IMR-90 (cell line): ENCODE measurements at regions of chr7 and their contacts with region 1.

Region 1: DNA sequence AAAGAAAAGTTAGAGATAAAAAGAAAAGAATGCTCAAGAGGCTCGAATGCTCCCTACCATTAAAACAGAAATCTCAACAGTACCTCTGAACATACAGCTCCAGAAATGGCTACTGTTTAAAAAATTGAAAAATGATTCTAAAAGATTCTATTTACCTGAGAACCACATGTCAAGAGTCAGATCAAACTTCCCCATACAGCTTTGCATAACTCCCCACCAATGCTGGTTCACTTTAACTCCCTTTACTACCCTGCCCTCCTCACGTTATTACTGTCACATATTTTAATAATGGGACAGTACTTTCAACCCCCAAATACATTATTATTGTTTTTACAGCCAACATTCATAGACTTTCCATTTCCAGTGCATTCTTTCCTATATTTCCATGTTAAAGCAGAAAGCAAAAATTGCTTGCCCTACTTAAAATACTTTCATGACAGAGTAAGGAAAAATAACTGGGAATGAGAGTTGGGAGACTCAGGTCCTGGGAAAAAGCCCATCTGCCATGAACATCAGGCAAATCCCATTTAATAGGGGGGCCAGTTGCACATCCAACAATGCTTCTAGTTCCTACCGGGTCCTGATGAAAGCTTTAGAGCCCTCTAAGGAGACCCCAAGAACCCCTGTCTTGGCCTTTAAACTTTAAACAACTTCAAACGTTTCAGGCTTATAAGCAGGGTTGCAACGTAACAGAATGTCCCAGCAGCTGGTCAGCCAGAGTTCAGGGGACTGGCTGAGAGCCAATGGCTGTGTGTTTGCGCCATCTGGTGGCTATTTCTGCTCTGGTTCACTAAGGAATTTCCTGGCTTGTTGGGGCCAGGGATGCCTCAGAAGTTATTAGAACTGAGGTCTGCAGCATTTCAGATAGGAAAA is 247.4 kb downstream of the ELMO1 start:
- DNase-seq: peak; percentile 68
- ATAC-seq: peak; percentile 81
- H3K4me3 ChIP-seq: no peak overlapping the region
- H3K27ac ChIP-seq: no peak overlapping the region
- H3K4me1 ChIP-seq: no peaks in the 10 kb centered on the region
- H3K27me3 ChIP-seq: no peaks in the 10 kb centered on the region
- CTCF ChIP-seq: peak; percentile 87
- POLR2A ChIP-seq: no peak
- RAD21 ChIP-seq: peak; percentile 52

Region 2: DNA sequence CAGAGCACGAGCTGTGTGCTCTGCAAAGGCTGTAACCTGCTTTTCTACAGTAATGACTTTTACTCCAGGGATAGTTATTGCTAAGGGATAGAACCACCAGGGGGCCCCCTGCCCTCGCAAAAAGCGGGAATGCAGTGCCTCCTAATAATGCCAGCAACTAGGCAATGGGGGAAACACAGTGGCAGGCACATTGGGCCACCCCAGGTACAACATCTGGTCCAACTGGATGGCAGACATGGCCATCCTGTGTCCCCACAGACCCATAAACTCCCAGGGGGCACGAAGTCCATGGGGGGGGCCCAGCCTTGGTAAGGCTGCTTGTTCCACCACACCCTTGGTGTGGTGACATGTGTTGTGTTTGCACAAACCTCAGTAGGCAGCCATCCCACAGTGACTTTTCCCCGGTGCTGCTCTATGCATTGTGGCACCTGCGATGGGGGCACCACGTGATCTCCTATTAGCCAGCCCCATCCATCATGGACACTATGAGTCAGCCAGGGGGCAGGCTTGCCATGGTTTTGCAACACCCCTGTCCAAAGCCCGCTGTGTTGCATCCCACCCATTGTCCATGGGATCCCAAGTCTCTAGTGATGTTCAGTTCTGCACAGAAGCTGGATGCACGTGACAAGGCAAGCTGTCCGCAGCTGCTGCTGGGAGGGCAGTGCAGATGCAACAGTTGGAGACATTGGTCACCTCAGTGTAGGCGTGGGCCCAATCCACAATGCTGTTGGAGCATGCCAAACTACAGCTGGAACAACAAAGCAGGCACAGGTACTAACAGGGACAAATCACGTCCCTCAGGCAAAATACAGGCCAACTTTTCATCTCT is 727.6 kb before region 1 on chr7:
- CTCF ChIA-PET with region 1: no interaction called
- POLR2A ChIA-PET with region 1: no interaction called
- dilution Hi-C with region 1: no loop called
- in situ Hi-C with region 1: no loop called
- intact Hi-C with region 1: loop called (anchors 5 kb)
- DNase-seq: no peak
- ATAC-seq: peak; percentile 53
- H3K4me3 ChIP-seq: no peak overlapping the region
- H3K27ac ChIP-seq: no peak overlapping the region
- H3K4me1 ChIP-seq: no peaks in the 10 kb centered on the region
- H3K27me3 ChIP-seq: peaks cover 4% of the 10 kb centered on the region; the same call in 1 of the 2 replicates
- CTCF ChIP-seq: peak; percentile 42
- POLR2A ChIP-seq: no peak
- RAD21 ChIP-seq: peak; percentile 59

Region 3: GRCh38 chr7:36670585-36671431 is 530.4 kb before region 1 on chr7:
- CTCF ChIA-PET with region 1: no interaction called
- POLR2A ChIA-PET with region 1: no interaction called
- dilution Hi-C with region 1: no loop called
- in situ Hi-C with region 1: loop called (anchors 25 kb)
- intact Hi-C with region 1: loop called (anchors 1 kb)
- DNase-seq: peak; percentile 62
- ATAC-seq: peak; percentile 98
- H3K4me3 ChIP-seq: no peak overlapping the region
- H3K27ac ChIP-seq: no peak overlapping the region
- H3K4me1 ChIP-seq: no peaks in the 10 kb centered on the region
- H3K27me3 ChIP-seq: peaks cover 10% of the 10 kb centered on the region
- CTCF ChIP-seq: peak; percentile 92
- POLR2A ChIP-seq: 0 out of 2 replicates have a peak, but pooled peaks have one; percentile 33
- RAD21 ChIP-seq: peak; percentile 93

Region 4: DNA sequence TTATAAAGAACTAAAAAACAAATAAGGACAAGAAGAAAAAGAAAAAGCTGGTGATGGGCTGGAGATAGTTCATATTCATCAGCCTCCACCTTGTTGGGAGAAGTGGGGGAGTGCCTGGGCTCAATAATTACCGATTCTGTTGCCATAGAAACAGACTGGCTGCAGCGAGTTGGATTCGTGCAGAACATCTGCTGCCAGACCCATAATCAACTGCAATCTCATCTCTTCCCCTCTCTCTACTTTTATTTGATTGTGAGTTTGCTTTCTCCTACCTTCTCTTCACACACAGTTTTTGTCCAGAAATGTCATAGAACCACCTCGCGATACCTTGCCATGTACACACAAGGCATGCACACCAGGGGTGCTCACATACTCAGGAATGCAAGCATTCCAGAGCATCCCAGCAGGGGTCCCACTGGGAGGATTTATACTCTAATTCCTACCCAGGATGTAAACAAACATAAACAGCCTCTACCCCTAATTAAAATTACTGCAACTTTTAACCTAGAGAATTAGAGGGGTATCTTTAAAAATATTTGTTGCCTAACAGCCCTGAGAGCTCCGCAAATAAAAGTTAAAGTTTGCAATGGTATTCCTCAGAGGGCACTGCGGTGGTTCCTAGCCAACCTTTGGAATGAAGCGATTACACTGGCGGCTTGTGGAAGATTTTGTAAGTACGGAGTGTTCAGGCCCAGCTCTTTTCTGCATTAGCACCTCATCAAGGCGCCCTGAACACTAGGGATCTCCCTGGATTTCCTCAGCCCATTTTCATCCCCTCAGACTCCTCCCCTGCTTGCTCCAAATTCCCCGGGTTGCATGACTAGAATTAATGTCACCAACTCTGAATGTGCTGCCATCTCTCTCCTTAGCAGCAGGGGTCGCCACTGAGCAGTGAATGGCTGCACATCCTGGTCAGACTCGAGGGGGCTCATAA is 214.5 kb before region 1 on chr7:
- CTCF ChIA-PET with region 1: interaction called, 4 read pairs
- POLR2A ChIA-PET with region 1: no interaction called
- dilution Hi-C with region 1: no loop called
- in situ Hi-C with region 1: no loop called
- intact Hi-C with region 1: loop called (anchors 1 kb)
- DNase-seq: peak; percentile 42
- ATAC-seq: peak; percentile 94
- H3K4me3 ChIP-seq: no peak overlapping the region
- H3K27ac ChIP-seq: no peak overlapping the region
- H3K4me1 ChIP-seq: no peaks in the 10 kb centered on the region
- H3K27me3 ChIP-seq: peaks cover 15% of the 10 kb centered on the region
- CTCF ChIP-seq: peak; percentile 88
- POLR2A ChIP-seq: no peak
- RAD21 ChIP-seq: peak; percentile 81

Region 5: GRCh38 chr7:37833107-37833817 is 632.0 kb after region 1 on chr7:
- CTCF ChIA-PET with region 1: no interaction called
- POLR2A ChIA-PET with region 1: no interaction called
- dilution Hi-C with region 1: no loop called
- in situ Hi-C with region 1: loop called (anchors 25 kb)
- intact Hi-C with region 1: no loop called
- DNase-seq: peak; percentile 35
- ATAC-seq: no peak
- H3K4me3 ChIP-seq: no peak overlapping the region
- H3K27ac ChIP-seq: no peak overlapping the region
- H3K4me1 ChIP-seq: no peaks in the 10 kb centered on the region
- H3K27me3 ChIP-seq: no peaks in the 10 kb centered on the region
- CTCF ChIP-seq: peak; percentile 59
- POLR2A ChIP-seq: no peak
- RAD21 ChIP-seq: peak; percentile 31; the same call in 1 of the 2 replicates

Region 6: GRCh38 chr7:37916673-37917660 is 715.7 kb after region 1 on chr7 and contains the start of gene SFRP4:
- CTCF ChIA-PET with region 1: no interaction called
- POLR2A ChIA-PET with region 1: no interaction called
- dilution Hi-C with region 1: no loop called
- in situ Hi-C with region 1: no loop called
- intact Hi-C with region 1: no loop called
- DNase-seq: peak; percentile 1
- ATAC-seq: 0 out of 2 replicates have a peak, but pooled peaks have one; percentile 44
- H3K4me3 ChIP-seq: no peak within 1 kb of the TSS
- H3K27ac ChIP-seq: no peak within 1 kb of the TSS
- H3K4me1 ChIP-seq: no peaks in the 10 kb centered on the region
- H3K27me3 ChIP-seq: peaks cover 3% of the 10 kb centered on the region; the same call in 1 of the 2 replicates
- CTCF ChIP-seq: peak; percentile 41
- POLR2A ChIP-seq: no peak
- RAD21 ChIP-seq: no peak; the same call in 1 of the 2 replicates
- total RNA-seq, gene SFRP4: not detected in 2 replicates